ENCODE measurements at regions of chr7 and their contacts with region 1.

Region 1: GRCh38 chr7:151172273-151173141 is 5.0 kb upstream of the GBX1 start:
- DNase-seq: peak; percentile 90 to 97 (median 94)
- ATAC-seq: peak; percentile 81
- H3K4me3 ChIP-seq: no peak overlapping the region
- H3K27ac ChIP-seq: no peak overlapping the region
- H3K4me1 ChIP-seq: peaks cover 0 to 28% of the 10 kb centered on the region in 2 experiments; a peak in 4 of 5 replicates
- H3K27me3 ChIP-seq: peaks cover 21 to 51% of the 10 kb centered on the region in 2 experiments
- CTCF ChIP-seq: peak; percentile 100
- EP300 ChIP-seq: peak; percentile 23; the same call in 1 of the 2 replicates
- POLR2A ChIP-seq: no peak
- RAD21 ChIP-seq: peak; percentile 97 to 100

Region 2: DNA sequence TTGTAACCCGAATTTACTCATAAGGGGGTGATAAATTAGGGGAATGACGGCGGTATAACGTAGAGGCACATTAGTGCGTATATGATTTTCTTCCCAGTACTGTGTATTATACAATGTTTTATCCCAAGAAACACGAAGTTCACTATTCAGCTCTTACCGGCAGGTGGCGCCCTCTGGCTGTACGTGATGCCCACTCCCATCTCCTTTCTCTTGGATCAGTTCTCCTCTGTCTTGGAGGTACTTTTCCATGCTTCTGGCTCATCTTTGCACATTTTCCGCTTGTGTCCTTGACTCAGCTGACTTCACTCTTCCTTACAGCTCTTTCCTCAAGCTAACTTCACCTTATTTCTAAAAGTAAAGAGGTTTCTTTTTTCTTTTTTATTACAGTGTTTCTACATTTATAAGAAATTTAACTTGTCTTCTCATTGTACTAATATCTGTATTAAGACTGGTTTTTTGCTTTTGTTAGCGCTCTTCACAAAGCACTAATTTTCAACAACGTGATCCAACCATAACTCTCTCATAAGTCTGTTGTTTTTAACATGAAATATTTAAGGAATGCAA is 393.7 kb before region 1 on chr7:
- CTCF ChIA-PET with region 1: interaction called, 22 read pairs
- POLR2A ChIA-PET with region 1: no interaction called
- in situ Hi-C with region 1: no loop called
- intact Hi-C with region 1: loop called (anchors 1 kb)
- DNase-seq: peak; percentile 80 to 85 (median 83)
- ATAC-seq: peak; percentile 99
- H3K4me3 ChIP-seq: no peak overlapping the region
- H3K27ac ChIP-seq: no peak overlapping the region
- H3K4me1 ChIP-seq: no peaks in the 10 kb centered on the region
- H3K27me3 ChIP-seq: peaks cover 10 to 15% of the 10 kb centered on the region in 2 experiments; a peak in 3 of 5 replicates
- CTCF ChIP-seq: peak; percentile 93 to 98 (median 97)
- EP300 ChIP-seq: peak; percentile 12; the same call in 1 of the 2 replicates
- POLR2A ChIP-seq: no peak
- RAD21 ChIP-seq: peak; percentile 95 to 97

Region 3: GRCh38 chr7:150898475-150899011 is 274.0 kb before region 1 on chr7:
- CTCF ChIA-PET with region 1: interaction called, 18 read pairs
- POLR2A ChIA-PET with region 1: no interaction called
- in situ Hi-C with region 1: no loop called
- intact Hi-C with region 1: no loop called
- DNase-seq: peak; percentile 88 to 93 (median 92)
- ATAC-seq: peak; percentile 94
- H3K4me3 ChIP-seq: no peak overlapping the region
- H3K27ac ChIP-seq: no peak overlapping the region; the same call in 2 of the 3 replicates
- H3K4me1 ChIP-seq: peaks cover 17 to 36% of the 10 kb centered on the region in 2 experiments; a peak in 4 of 5 replicates
- H3K27me3 ChIP-seq: peaks cover 17 to 27% of the 10 kb centered on the region in 2 experiments; a peak in 4 of 5 replicates
- CTCF ChIP-seq: peak; percentile 97 to 100 (median 98)
- EP300 ChIP-seq: peak; percentile 17; the same call in 1 of the 2 replicates
- POLR2A ChIP-seq: no peak
- RAD21 ChIP-seq: peak; percentile 99

Region 4: DNA sequence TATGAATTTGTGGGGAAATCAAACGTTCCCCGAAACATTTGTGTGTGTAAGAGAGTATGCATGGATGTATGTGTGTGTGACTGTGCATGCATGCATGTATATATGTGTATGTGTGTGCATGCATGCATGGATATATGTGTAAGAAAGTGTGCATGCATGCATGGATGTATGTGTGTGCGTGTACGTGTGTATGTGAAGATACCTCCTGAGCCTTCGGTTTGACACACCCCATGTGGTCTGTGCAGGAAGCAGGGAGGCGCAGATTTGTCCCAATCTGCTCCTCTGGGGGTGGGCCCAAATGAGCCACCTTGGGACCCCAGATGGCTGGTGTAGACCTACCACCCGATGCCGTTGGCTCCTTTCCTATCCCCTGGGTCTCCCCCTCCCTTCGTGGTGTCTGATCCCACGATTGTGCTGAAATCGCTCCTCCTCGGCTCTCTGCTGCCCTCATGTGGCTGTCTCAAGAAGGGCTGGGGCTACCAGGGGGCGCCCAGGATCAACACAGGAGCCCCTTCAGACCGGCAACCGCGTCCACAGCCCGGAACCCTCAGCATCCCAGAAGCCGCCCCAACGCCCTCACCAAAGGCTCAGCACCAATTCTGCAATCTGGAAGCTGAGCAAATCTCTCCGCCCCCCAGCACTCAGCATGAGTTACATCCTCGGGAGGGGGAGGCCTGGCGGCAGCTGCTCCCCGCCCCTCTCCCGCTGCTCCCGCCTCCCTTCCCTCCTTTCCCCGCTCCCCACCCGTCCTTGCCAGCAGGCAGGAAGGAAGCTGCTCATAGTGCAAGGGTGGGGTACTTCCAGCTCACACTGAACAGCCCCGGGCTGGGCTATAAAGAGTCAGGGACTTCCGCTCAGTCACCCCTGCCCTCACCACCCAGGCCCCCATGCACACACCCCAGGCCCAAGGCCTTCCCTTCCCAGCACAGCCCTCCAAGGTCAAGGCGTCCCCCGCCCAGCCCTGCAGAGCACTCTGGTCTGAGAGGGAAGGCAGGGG is 184.0 kb before region 1 on chr7:
- CTCF ChIA-PET with region 1: interaction called, 3 read pairs
- POLR2A ChIA-PET with region 1: no interaction called
- in situ Hi-C with region 1: no loop called
- intact Hi-C with region 1: loop called (anchors 5 kb)
- DNase-seq: peak; percentile 89 to 92 (median 91)
- ATAC-seq: peak; percentile 82
- H3K4me3 ChIP-seq: no peak overlapping the region
- H3K27ac ChIP-seq: no peak overlapping the region
- H3K4me1 ChIP-seq: peaks cover 26 to 36% of the 10 kb centered on the region in 2 experiments
- H3K27me3 ChIP-seq: no peaks in the 10 kb centered on the region
- CTCF ChIP-seq: peak; percentile 98 to 99 (median 98)
- EP300 ChIP-seq: no peak
- POLR2A ChIP-seq: no peak
- RAD21 ChIP-seq: peak; percentile 95 to 96

Region 5: GRCh38 chr7:151085691-151086620 is 86.6 kb before region 1 on chr7 and contains the start of gene AGAP3:
- CTCF ChIA-PET with region 1: no interaction called
- POLR2A ChIA-PET with region 1: no interaction called
- in situ Hi-C with region 1: no loop called
- intact Hi-C with region 1: loop called (anchors 1 kb)
- DNase-seq: peak; percentile 97 to 99 (median 98)
- ATAC-seq: peak; percentile 69
- H3K4me3 ChIP-seq: peak within 1 kb of the TSS; percentile 67
- H3K27ac ChIP-seq: peak within 1 kb of the TSS; percentile 85
- H3K4me1 ChIP-seq: peaks cover 48 to 79% of the 10 kb centered on the region in 2 experiments
- H3K27me3 ChIP-seq: no peaks in the 10 kb centered on the region
- CTCF ChIP-seq: 0 out of 6 replicates have a peak, but pooled peaks of 2 of the 3 experiments have one; percentile 1 to 11
- EP300 ChIP-seq: 0 out of 2 replicates have a peak, but pooled peaks have one; percentile 7
- POLR2A ChIP-seq: peak; percentile 97
- RAD21 ChIP-seq: no peak
- polyA plus RNA-seq, gene AGAP3: 3.4 to 4.4 TPM

Region 6: GRCh38 chr7:151244196-151244840 is 71.8 kb after region 1 on chr7:
- CTCF ChIA-PET with region 1: interaction called, 10 read pairs
- POLR2A ChIA-PET with region 1: no interaction called
- in situ Hi-C with region 1: no loop called
- intact Hi-C with region 1: no loop called
- DNase-seq: peak; percentile 82 to 88 (median 85)
- ATAC-seq: peak; percentile 37
- H3K4me3 ChIP-seq: no peak overlapping the region
- H3K27ac ChIP-seq: no peak overlapping the region
- H3K4me1 ChIP-seq: peaks cover 31 to 63% of the 10 kb centered on the region in 2 experiments
- H3K27me3 ChIP-seq: peaks cover 0 to 20% of the 10 kb centered on the region in 2 experiments; a peak in 1 of 5 replicates
- CTCF ChIP-seq: peak; percentile 93 to 98 (median 97)
- EP300 ChIP-seq: no peak
- POLR2A ChIP-seq: no peak
- RAD21 ChIP-seq: peak; percentile 69 to 78

Region 7: GRCh38 chr7:151351027-151351426 is 178.5 kb after region 1 on chr7:
- CTCF ChIA-PET with region 1: interaction called, 4 read pairs
- POLR2A ChIA-PET with region 1: no interaction called
- in situ Hi-C with region 1: no loop called
- intact Hi-C with region 1: loop called (anchors 5 kb)
- DNase-seq: peak; percentile 57 to 72 (median 62)
- ATAC-seq: peak; percentile 79
- H3K4me3 ChIP-seq: no peak overlapping the region
- H3K27ac ChIP-seq: no peak overlapping the region
- H3K4me1 ChIP-seq: peaks cover 4 to 11% of the 10 kb centered on the region in 2 experiments; a peak in 4 of 5 replicates
- H3K27me3 ChIP-seq: no peaks in the 10 kb centered on the region
- CTCF ChIP-seq: peak; percentile 68 to 75 (median 71)
- EP300 ChIP-seq: no peak
- POLR2A ChIP-seq: no peak
- RAD21 ChIP-seq: peak in 1 of 2 experiments; percentile 30; a peak in 1 of 4 replicates

Measured in K562 (cell line).